ENCODE measurements at regions of chr11 and their contacts with region 1.

Region 1: GRCh38 chr11:33039274-33040032 is at the start of gene TCP11L1:
- DNase-seq: peak; percentile 90
- ATAC-seq: peak; percentile 84
- H3K4me3 ChIP-seq: peak within 1 kb of the TSS; percentile 77 to 99 (median 95)
- H3K4me3 Mint-ChIP-seq: peak within 1 kb of the TSS; percentile 96
- H3K27ac ChIP-seq: peak within 1 kb of the TSS; percentile 79 to 88
- H3K27ac Mint-ChIP-seq: peak within 1 kb of the TSS; percentile 94
- H3K4me1 ChIP-seq: peaks cover 8 to 18% of the 10 kb centered on the region in 2 donors
- H3K4me1 Mint-ChIP-seq: peaks cover 16% of the 10 kb centered on the region
- H3K27me3 ChIP-seq: no peaks in the 10 kb centered on the region
- H3K27me3 Mint-ChIP-seq: peaks cover 8% of the 10 kb centered on the region
- CTCF ChIP-seq: no peak
- total RNA-seq, gene TCP11L1: 19.7 and 19.8 TPM in 2 replicates

Region 2: GRCh38 chr11:33016654-33017053 is 22.8 kb before region 1 on chr11:
- CTCF ChIA-PET with region 1: no interaction called
- POLR2A ChIA-PET with region 1: no interaction called
- intact Hi-C with region 1: loop called (anchors 1 kb)
- DNase-seq: no peak
- ATAC-seq: no peak
- H3K4me3 ChIP-seq: peak overlapping the region in 1 of 5 experiments; percentile 56
- H3K4me3 Mint-ChIP-seq: peak overlapping the region; percentile 79
- H3K27ac ChIP-seq: no peak overlapping the region
- H3K27ac Mint-ChIP-seq: no peak overlapping the region
- H3K4me1 ChIP-seq: peaks cover 8 to 11% of the 10 kb centered on the region in 2 donors
- H3K4me1 Mint-ChIP-seq: peaks cover 11% of the 10 kb centered on the region
- H3K27me3 ChIP-seq: peaks cover 0 to 33% (median 26%) of the 10 kb centered on the region in 4 experiments
- H3K27me3 Mint-ChIP-seq: peaks cover 55% of the 10 kb centered on the region
- CTCF ChIP-seq: no peak

Region 3: DNA sequence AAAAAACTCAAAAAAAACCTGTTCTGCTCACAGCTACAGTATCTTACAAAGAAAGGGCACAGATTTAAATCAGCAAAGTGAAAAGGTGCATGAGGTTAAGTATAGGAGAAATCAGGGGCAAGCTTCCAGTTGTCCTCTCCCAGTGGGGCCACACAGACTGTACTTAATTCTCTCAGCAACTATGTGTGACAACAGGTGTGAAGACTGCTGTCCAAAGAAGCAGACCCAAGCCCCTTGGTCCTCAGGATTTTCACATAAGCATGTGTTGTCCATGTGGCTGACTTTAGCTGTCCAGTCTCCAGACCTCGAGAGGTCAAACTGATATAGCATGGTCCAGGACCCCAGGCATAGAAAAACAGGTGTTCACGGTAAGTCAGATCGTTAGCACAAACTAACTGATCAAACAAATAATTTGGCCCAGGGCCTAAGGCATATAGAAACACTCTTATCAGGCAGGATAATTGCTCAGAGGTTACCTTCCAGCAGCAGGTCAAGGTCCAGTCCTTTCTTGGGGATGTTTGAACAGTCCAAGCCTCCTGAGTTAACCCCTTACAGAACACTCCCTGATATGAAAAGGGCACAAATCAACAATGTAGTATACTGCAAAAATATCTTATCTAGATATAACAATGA is 142.9 kb after region 1 on chr11:
- CTCF ChIA-PET with region 1: no interaction called
- POLR2A ChIA-PET with region 1: no interaction called
- intact Hi-C with region 1: no loop called
- DNase-seq: no peak
- ATAC-seq: no peak
- H3K4me3 ChIP-seq: no peak overlapping the region
- H3K4me3 Mint-ChIP-seq: no peak overlapping the region
- H3K27ac ChIP-seq: no peak overlapping the region
- H3K27ac Mint-ChIP-seq: no peak overlapping the region
- H3K4me1 ChIP-seq: no peaks in the 10 kb centered on the region
- H3K4me1 Mint-ChIP-seq: no peaks in the 10 kb centered on the region
- H3K27me3 ChIP-seq: no peaks in the 10 kb centered on the region
- H3K27me3 Mint-ChIP-seq: no peaks in the 10 kb centered on the region
- CTCF ChIP-seq: no peak

Region 4: DNA sequence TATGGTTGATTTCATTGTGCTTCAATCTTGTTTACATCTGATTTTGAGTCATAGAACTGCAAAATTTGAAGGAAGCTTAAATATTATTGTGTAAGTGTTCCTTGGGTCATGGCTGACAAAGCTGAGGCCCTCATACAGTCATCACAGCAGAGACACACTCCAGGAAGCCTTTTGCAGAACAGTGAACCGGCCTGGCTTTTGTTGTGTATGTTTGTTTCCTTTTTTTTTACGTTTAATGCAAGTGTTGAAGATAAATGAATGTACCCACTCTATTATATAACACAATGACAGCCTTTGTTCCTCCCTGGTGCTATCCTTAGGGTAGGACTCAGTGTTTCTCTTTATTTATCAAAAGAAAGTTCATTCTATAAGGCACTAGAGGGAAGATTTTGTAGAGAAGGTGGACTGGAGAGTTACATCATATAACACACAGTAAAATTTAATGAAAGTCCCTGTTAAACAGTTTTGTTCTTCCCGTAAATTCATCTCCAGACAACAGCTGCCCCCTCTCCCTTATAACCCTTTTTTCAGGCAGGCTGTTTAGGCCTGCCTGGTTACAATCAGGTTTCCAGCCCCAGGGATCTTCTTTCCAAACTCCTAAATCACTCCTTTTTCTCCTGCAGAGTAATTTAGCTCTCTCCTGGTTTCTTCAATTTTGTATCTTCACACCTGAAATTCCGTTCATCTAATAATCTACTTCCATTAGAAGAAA is 156.2 kb after region 1 on chr11:
- CTCF ChIA-PET with region 1: no interaction called
- POLR2A ChIA-PET with region 1: no interaction called
- intact Hi-C with region 1: no loop called
- DNase-seq: no peak
- ATAC-seq: no peak
- H3K4me3 ChIP-seq: no peak overlapping the region
- H3K4me3 Mint-ChIP-seq: no peak overlapping the region
- H3K27ac ChIP-seq: no peak overlapping the region
- H3K27ac Mint-ChIP-seq: no peak overlapping the region
- H3K4me1 ChIP-seq: no peaks in the 10 kb centered on the region
- H3K4me1 Mint-ChIP-seq: no peaks in the 10 kb centered on the region
- H3K27me3 ChIP-seq: no peaks in the 10 kb centered on the region
- H3K27me3 Mint-ChIP-seq: no peaks in the 10 kb centered on the region
- CTCF ChIP-seq: no peak

Measured in B cell (primary cell).